SK-N-SH (cell line): ENCODE measurements at regions of chr3 and their contacts with region 1.

Region 1: GRCh38 chr3:9249273-9250192 is at the start of gene SRGAP3:
- DNase-seq: peak; percentile 89
- H3K4me3 ChIP-seq: peak within 1 kb of the TSS; percentile 69 to 74
- H3K27ac ChIP-seq: peak within 1 kb of the TSS in 1 of 2 experiments; percentile 78; a peak in 2 of 4 replicates
- H3K4me1 ChIP-seq: peaks cover 0 to 34% of the 10 kb centered on the region in 2 experiments; a peak in 2 of 4 replicates
- H3K27me3 ChIP-seq: peaks cover 2% of the 10 kb centered on the region; the same call in 1 of the 2 replicates
- CTCF ChIP-seq: peak; percentile 39; the same call in 1 of the 2 replicates
- EP300 ChIP-seq: no peak
- RAD21 ChIP-seq: peak; percentile 53
- polyA plus RNA-seq, gene SRGAP3: 2.8 and 3.0 TPM in 2 replicates

Region 2: GRCh38 chr3:9153904-9154619 is 95.5 kb before region 1 on chr3:
- CTCF ChIA-PET with region 1: no interaction called
- POLR2A ChIA-PET with region 1: no interaction called
- DNase-seq: no peak
- H3K4me3 ChIP-seq: no peak overlapping the region
- H3K27ac ChIP-seq: no peak overlapping the region
- H3K4me1 ChIP-seq: peaks cover 0 to 4% of the 10 kb centered on the region in 2 experiments; a peak in 1 of 4 replicates
- H3K27me3 ChIP-seq: no peaks in the 10 kb centered on the region
- CTCF ChIP-seq: no peak
- EP300 ChIP-seq: no peak
- RAD21 ChIP-seq: no peak

Region 3: DNA sequence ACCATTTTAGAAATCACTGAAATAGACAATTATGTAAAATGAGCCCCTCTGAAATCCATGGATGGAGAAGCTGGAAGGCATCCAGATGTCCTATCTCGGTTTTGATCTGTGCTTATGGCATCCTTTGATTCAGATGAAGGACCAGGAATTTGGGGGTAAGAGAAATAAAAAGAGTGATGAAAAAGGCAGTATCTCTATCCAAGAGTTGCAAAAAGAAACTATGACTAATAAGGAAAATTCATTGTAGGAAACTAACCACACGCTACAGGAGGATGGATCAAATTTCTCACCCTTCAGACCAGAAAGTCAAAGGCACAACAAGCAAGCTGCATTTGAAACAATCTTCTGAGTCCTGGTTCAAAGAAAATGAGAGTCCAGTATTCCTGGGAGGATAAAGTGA is 34.9 kb before region 1 on chr3:
- CTCF ChIA-PET with region 1: interaction called, 15 read pairs
- POLR2A ChIA-PET with region 1: no interaction called
- DNase-seq: no peak
- H3K4me3 ChIP-seq: no peak overlapping the region
- H3K27ac ChIP-seq: peak overlapping the region; percentile 12 to 18; a peak in 2 of 4 replicates
- H3K4me1 ChIP-seq: peaks cover 0 to 28% of the 10 kb centered on the region in 2 experiments; a peak in 2 of 4 replicates
- H3K27me3 ChIP-seq: no peaks in the 10 kb centered on the region
- CTCF ChIP-seq: no peak
- EP300 ChIP-seq: peak in 1 of 2 experiments; percentile 54; a peak in 1 of 4 replicates
- RAD21 ChIP-seq: no peak

Region 4: GRCh38 chr3:9231006-9231405 is 18.5 kb before region 1 on chr3:
- CTCF ChIA-PET with region 1: interaction called, 12 read pairs
- POLR2A ChIA-PET with region 1: no interaction called
- DNase-seq: no peak
- H3K4me3 ChIP-seq: no peak overlapping the region
- H3K27ac ChIP-seq: no peak overlapping the region
- H3K4me1 ChIP-seq: peaks cover 0 to 16% of the 10 kb centered on the region in 2 experiments; a peak in 2 of 4 replicates
- H3K27me3 ChIP-seq: no peaks in the 10 kb centered on the region
- CTCF ChIP-seq: no peak
- EP300 ChIP-seq: no peak
- RAD21 ChIP-seq: no peak

Region 5: GRCh38 chr3:9266716-9267115 is 17.2 kb after region 1 on chr3:
- CTCF ChIA-PET with region 1: no interaction called
- POLR2A ChIA-PET with region 1: no interaction called
- DNase-seq: no peak
- H3K4me3 ChIP-seq: no peak overlapping the region
- H3K27ac ChIP-seq: no peak overlapping the region
- H3K4me1 ChIP-seq: no peaks in the 10 kb centered on the region; a peak in 1 of 4 replicates
- H3K27me3 ChIP-seq: no peaks in the 10 kb centered on the region
- CTCF ChIP-seq: no peak
- EP300 ChIP-seq: no peak
- RAD21 ChIP-seq: no peak

Region 6: GRCh38 chr3:9280451-9281219 is 31.1 kb after region 1 on chr3:
- CTCF ChIA-PET with region 1: interaction called, 14 read pairs
- POLR2A ChIA-PET with region 1: interaction called, 3 read pairs
- DNase-seq: peak; percentile 61
- H3K4me3 ChIP-seq: no peak overlapping the region
- H3K27ac ChIP-seq: peak overlapping the region; percentile 45 to 67
- H3K4me1 ChIP-seq: peaks cover 0 to 11% of the 10 kb centered on the region in 2 experiments; a peak in 2 of 4 replicates
- H3K27me3 ChIP-seq: no peaks in the 10 kb centered on the region
- CTCF ChIP-seq: no peak
- EP300 ChIP-seq: no peak
- RAD21 ChIP-seq: no peak